ENCODE measurements at regions of chr12 and their contacts with region 1.

Region 1: DNA sequence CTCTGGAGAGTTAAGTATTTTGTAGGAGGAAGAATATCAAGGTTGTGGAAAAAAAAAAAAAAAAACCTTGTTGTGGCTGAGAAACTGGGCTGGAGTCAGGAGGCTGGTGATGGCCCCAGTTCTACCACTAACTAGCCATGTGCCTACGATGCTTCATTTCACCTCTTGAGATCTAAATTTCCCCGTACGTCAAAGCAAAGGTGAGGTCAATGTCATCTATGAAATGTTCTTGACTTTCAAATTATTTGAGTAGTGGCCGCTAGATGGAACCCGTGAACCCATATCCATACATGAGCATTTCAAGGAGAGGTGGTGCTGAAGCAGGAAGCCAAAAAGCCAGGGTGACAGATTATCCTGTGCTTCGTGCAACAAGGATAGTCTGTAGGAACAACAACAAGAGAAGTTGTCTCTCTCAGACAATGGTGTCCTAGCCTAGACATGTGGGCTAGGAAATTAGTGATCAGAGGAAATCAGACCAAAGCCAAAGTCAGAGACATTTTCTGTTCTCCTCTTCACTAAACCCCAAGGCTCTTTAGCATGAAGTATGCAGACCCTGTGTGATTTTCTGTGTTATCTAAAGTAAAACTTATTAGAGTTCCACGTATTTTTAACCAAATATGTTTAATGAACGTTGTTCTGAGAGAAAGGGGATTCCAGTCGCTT is 95.5 kb upstream of the ETV6 start:
- DNase-seq: peak in 1 of 2 donors; percentile 78
- H3K4me3 ChIP-seq: no peak overlapping the region
- H3K27ac ChIP-seq: no peak overlapping the region
- H3K4me1 ChIP-seq: peaks cover 0 to 12% of the 10 kb centered on the region in 2 donors
- H3K27me3 ChIP-seq: no peaks in the 10 kb centered on the region
- CTCF ChIP-seq: peak; percentile 52 to 69 (median 52)

Region 2: DNA sequence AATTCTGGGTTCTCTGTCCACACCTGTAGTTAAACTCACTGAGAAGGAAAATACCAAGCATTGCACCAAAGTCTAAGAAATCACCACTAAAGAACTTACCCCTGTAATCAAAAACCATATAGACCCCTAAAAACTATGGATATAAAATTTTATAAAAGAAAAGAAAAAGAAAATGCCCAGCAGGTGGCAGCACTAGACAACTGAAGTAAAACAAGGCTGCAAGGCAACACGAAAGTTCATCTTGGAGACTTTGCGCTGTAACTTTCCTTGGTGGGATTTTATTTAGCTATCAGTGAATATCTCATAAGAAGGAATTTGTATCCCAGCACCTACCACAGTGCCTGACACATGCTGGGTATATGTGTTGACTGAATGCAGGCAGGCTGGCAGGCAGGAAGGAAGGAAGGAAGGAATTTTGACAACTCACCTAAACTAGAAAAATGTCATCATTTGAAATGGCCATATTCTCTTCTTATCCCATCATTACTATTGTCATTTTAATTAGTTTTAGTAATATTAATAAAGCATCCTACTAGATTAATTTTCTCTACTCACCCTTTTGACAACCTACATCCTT is 27.3 kb after region 1 on chr12:
- intact Hi-C with region 1: loop called (anchors 1 kb)
- DNase-seq: peak in 1 of 2 donors; percentile 81
- H3K4me3 ChIP-seq: no peak overlapping the region
- H3K27ac ChIP-seq: peak overlapping the region; percentile 69 to 82
- H3K4me1 ChIP-seq: peaks cover 6 to 31% of the 10 kb centered on the region in 2 donors
- H3K27me3 ChIP-seq: no peaks in the 10 kb centered on the region
- CTCF ChIP-seq: peak; percentile 55 to 61 (median 59)

Region 3: DNA sequence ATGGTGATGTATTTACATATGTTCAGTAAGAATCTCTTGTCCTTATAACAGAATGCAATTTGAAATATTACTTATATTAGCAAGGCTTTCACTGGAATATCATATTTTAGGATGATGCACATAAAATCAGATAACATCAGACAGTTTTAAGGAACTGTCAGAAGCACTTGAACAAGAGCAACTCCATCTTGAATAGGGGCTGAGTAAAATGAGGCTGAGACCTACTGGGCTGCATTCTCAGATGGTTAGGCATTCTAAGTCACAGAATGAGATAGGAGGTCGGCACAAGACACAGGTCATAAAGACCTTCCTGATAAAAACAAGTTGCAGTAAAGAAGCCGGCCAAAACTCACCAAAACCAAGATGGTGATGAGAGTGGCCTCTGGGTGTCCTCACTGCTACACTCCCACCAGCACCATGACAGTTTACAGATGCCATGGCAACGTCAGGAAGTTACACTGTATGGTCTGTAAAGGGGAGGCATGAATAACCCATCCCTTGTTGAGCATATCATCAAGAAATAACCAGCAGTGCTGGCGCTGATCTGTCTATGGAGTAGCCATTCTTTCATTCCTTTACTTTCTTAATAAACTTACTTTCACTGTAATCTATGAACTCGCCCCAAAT is 67.9 kb after region 1 on chr12:
- intact Hi-C with region 1: loop called (anchors 5 kb)
- DNase-seq: no peak
- H3K4me3 ChIP-seq: no peak overlapping the region
- H3K27ac ChIP-seq: no peak overlapping the region
- H3K4me1 ChIP-seq: peaks cover 4 to 5% of the 10 kb centered on the region in 2 donors
- H3K27me3 ChIP-seq: no peaks in the 10 kb centered on the region
- CTCF ChIP-seq: peak in 1 of 3 experiments; percentile 12

Region 4: DNA sequence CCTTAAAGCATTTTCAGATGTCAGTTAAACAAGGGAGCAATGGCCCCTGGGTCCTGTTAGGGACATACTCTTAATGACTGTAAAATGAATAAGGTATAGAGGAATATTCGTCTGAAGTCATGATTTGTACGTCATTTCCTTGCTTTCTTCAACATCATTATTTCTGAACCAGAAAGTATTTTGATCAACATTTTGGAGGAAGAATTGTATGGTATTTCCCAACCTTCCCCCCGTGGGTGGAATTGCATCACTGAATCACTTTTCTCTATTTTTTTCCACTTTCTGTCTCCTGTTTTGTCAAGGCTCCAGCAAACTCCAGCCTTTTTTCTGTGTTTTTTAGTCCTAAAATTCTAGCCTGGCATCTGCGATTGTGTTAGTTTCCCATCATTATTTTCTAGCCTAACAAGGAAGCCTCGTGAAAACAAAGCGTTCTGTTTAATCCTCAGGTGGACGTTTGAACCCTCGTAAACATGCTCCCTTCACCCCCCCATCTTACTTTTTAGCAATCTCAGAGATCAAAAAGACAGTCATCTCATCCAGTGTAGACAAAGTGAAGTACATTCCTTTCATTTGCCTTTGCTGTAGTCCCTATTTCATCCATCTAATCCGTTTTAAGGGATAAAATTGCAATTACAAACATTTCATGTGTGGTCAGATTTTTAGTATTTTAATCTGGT is 157.8 kb after region 1 on chr12:
- intact Hi-C with region 1: no loop called
- DNase-seq: no peak
- H3K4me3 ChIP-seq: no peak overlapping the region
- H3K27ac ChIP-seq: peak overlapping the region; percentile 47 to 57
- H3K4me1 ChIP-seq: peaks cover 3 to 31% of the 10 kb centered on the region in 2 donors
- H3K27me3 ChIP-seq: no peaks in the 10 kb centered on the region
- CTCF ChIP-seq: no peak

Region 5: GRCh38 chr12:12032851-12033588 is 479.0 kb after region 1 on chr12:
- intact Hi-C with region 1: loop called (anchors 1 kb)
- DNase-seq: peak in 1 of 2 donors; percentile 86
- H3K4me3 ChIP-seq: peak overlapping the region; percentile 53 to 60
- H3K27ac ChIP-seq: peak overlapping the region; percentile 69 to 71
- H3K4me1 ChIP-seq: peaks cover 0 to 6% of the 10 kb centered on the region in 2 donors
- H3K27me3 ChIP-seq: no peaks in the 10 kb centered on the region
- CTCF ChIP-seq: peak; percentile 82 to 90 (median 88)

Region 6: GRCh38 chr12:12334367-12335040 is 780.5 kb after region 1 on chr12:
- intact Hi-C with region 1: loop called (anchors 10 kb)
- DNase-seq: peak in 1 of 2 donors; percentile 56
- H3K4me3 ChIP-seq: no peak overlapping the region
- H3K27ac ChIP-seq: peak overlapping the region; percentile 24 to 51
- H3K4me1 ChIP-seq: peaks cover 9 to 33% of the 10 kb centered on the region in 2 donors
- H3K27me3 ChIP-seq: no peaks in the 10 kb centered on the region
- CTCF ChIP-seq: peak; percentile 47 to 67 (median 60)

Measured in ascending aorta (tissue), 2 donors.